Activated B cell treated with CpG ODN at 0.5 μM for 24 hours (primary cell): ENCODE measurements at regions of chr22 and their contacts with region 1.

Region 1: GRCh38 chr22:41800348-41801146 is at the start of gene CCDC134:
- DNase-seq: peak; percentile 88
- ATAC-seq: peak; percentile 98
- H3K4me3 Mint-ChIP-seq: peak within 1 kb of the TSS; percentile 98
- H3K27ac Mint-ChIP-seq: peak within 1 kb of the TSS; percentile 97
- H3K4me1 Mint-ChIP-seq: peaks cover 34% of the 10 kb centered on the region
- H3K27me3 Mint-ChIP-seq: no peaks in the 10 kb centered on the region
- CTCF ChIP-seq: no peak
- total RNA-seq, gene CCDC134: 9.2 and 13.2 TPM in 2 replicates

Region 2: GRCh38 chr22:41666661-41667258 is 133.8 kb before region 1 on chr22:
- CTCF ChIA-PET with region 1: interaction called, 3 read pairs
- POLR2A ChIA-PET with region 1: interaction called, 10 read pairs
- intact Hi-C with region 1: no loop called
- DNase-seq: peak; percentile 94
- ATAC-seq: peak; percentile 95
- H3K4me3 Mint-ChIP-seq: peak overlapping the region; percentile 84
- H3K27ac Mint-ChIP-seq: peak overlapping the region; percentile 92
- H3K4me1 Mint-ChIP-seq: peaks cover 5% of the 10 kb centered on the region
- H3K27me3 Mint-ChIP-seq: no peaks in the 10 kb centered on the region
- CTCF ChIP-seq: peak; percentile 74

Region 3: DNA sequence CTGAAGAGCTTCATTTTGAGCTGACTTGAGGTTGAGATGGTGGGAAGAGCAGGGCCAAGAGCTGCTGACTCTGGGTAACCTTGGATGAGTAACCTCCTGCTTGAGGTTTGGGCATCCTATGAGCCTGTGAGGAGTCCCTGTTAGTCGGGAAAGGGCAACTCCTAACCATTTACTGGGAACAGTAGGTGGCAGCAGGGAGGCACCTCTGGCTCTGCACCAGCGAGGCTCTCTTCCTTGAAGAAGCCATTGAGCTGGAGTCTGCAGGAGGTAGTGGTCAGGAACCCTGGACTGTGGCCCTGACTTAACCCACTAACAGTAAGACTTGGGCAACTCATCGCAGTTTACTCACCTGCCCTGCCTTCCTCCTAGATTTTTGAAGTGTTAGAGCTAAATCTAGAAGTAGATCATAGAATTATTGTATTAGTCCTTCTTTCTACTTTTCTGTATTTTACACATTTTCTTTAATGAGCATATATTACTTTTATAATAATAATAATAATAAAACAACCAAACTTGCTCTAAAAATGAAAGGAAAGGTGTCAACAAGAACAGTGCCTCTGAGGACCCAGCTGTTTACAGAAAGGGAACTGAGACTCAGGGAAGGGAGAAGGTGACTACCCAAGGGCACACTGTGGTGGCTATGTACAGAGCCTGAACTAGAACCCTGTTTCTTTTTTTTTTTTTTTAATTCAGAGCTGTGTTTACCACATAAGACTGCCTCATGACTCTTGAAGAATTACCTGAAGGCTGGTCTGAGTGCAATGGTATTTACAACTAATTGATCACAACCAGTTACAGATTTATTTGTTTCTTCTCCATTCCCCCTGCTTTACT is 53.8 kb before region 1 on chr22:
- CTCF ChIA-PET with region 1: interaction called, 4 read pairs
- POLR2A ChIA-PET with region 1: interaction called, 28 read pairs
- intact Hi-C with region 1: loop called (anchors 2 kb)
- DNase-seq: peak; percentile 18
- ATAC-seq: peak; percentile 96
- H3K4me3 Mint-ChIP-seq: peak overlapping the region; percentile 38
- H3K27ac Mint-ChIP-seq: peak overlapping the region; percentile 69
- H3K4me1 Mint-ChIP-seq: peaks cover 31% of the 10 kb centered on the region
- H3K27me3 Mint-ChIP-seq: no peaks in the 10 kb centered on the region
- CTCF ChIP-seq: no peak

Region 4: DNA sequence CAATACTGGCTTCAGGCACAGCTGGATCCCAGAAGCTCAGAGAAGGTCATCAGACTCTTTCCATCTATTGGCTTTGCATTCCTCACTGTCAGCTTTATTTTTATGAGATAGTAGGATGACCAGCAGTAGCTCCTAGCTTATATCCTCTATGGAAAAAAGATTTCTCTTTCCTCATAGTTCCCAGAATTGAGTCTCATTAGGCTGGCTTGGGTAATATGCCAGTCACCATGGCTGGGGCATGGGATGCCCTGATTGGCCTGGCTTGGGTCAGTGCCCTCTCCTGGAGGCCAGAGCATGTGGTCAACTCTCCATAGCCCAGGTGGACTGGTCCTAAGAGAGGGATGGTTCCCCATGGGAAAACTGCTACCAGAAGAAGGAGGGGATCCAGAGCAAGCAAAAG is 14.1 kb before region 1 on chr22:
- CTCF ChIA-PET with region 1: interaction called, 5 read pairs
- POLR2A ChIA-PET with region 1: interaction called, 175 read pairs
- intact Hi-C with region 1: loop called (anchors 1 kb)
- DNase-seq: no peak
- ATAC-seq: no peak
- H3K4me3 Mint-ChIP-seq: no peak overlapping the region
- H3K27ac Mint-ChIP-seq: no peak overlapping the region
- H3K4me1 Mint-ChIP-seq: peaks cover 24% of the 10 kb centered on the region
- H3K27me3 Mint-ChIP-seq: no peaks in the 10 kb centered on the region
- CTCF ChIP-seq: no peak

Region 5: DNA sequence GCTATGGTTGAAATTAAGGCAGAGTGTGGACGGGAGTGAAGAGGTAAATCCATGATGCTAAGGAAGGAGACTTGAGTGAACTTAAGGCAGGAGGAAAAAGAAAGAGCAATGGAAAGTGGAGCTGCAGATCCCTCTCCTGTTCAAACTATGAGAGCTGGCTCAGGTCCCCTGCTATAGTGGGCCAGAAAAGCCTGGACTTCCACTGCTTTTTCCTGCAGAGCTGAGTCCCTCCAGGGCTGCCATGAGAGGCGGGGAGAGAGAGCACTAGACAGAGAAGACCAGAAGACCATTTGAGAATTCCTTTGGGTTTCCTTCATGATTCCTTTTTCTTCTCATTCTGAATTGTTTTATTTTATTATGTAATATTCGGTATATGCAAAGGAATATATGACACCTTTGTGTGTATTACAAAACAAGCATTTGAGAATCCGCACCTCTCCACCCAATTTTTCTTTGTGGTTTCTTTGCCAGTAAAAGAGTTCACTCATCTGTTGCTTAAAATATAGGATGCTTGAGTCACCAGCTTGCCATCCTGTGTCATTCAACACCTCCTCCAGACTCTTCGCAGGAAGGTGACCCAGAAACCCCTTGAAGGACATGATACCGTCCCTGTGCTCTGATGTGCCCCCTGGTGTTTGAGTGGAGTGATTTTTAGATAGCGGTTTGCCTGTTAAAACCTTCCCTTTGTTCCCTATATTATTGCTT is 56.8 kb after region 1 on chr22:
- CTCF ChIA-PET with region 1: interaction called, 3 read pairs
- POLR2A ChIA-PET with region 1: interaction called, 19 read pairs
- intact Hi-C with region 1: loop called (anchors 10 kb)
- DNase-seq: no peak
- ATAC-seq: peak; percentile 18
- H3K4me3 Mint-ChIP-seq: peak overlapping the region; percentile 45
- H3K27ac Mint-ChIP-seq: peak overlapping the region; percentile 77
- H3K4me1 Mint-ChIP-seq: peaks cover 72% of the 10 kb centered on the region
- H3K27me3 Mint-ChIP-seq: no peaks in the 10 kb centered on the region
- CTCF ChIP-seq: no peak

Region 6: DNA sequence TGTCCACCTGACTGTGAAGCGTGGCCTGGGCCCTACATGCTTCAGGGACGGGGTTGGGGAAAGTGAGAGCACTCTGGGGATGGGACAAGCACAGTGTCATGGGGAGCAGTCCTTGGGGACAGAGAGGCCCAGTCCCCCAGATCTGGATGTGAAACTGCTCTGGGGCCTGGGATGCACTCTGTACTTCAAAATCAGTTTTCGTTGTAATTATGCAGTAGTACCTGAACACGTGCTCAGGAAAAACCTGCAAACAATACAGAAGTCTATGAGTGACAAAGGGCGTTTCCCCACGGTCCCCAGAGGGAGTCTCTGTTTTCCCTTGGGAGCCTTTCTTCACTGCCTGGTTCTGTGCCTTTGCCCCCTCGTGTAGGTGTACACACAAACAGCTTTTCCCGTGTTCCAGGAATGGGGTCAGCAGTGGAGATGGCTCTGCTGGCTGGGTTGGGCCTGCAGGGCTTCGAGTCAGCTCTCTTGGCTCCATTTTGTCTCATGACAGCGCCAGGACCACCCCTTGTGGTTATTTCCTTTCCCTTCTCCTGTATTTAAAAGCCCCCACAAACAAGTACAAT is 131.2 kb after region 1 on chr22:
- CTCF ChIA-PET with region 1: no interaction called
- POLR2A ChIA-PET with region 1: interaction called, 14 read pairs
- intact Hi-C with region 1: no loop called
- DNase-seq: peak; percentile 72
- ATAC-seq: peak; percentile 35
- H3K4me3 Mint-ChIP-seq: peak overlapping the region; percentile 52
- H3K27ac Mint-ChIP-seq: peak overlapping the region; percentile 100
- H3K4me1 Mint-ChIP-seq: peaks cover 97% of the 10 kb centered on the region
- H3K27me3 Mint-ChIP-seq: no peaks in the 10 kb centered on the region
- CTCF ChIP-seq: no peak

Region 7: DNA sequence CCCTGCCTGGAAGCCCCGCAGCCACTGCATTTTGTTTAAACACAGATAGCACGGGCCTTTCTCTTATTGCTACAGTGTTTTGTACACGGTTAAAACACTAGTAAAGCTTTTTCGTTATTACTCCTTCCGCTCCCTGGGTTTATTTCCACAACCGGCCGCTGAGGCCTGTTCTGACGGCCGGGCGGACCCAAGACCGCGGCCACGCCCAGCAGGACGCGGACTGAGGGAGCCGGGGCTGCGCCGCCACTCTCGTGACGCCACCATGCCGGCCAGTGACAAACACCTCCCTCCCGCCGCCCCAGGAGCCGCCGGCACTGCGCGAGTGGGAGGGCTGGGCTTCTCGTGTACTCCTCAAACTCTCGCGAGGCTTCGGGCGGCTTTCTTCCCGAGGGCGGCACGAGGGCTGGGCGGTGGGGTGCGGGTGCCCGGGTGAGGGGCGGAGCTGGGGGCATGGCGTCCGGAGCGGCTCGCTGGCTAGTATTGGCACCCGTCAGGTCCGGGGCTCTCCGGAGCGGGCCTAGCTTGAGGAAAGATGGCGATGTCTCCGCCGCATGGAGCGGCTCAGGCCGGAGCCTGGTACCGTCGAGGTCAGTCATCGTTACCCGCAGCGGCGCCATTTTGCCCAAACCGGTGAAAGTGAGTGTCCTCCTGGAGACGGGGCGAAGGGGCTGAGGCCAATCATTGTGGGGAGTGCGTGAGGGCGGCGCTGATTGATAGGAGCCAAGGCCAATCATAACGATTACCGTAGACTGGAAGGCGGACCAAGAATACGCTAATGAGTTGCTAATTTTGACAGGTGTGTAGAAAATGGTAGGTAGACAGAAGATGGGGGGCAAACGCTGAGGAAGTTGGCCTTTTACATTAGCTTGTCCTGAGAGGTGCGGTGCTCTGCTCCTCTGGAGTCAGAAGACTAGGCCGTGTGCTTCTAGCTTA is 279.0 kb after region 1 on chr22 and contains the start of gene SMDT1:
- CTCF ChIA-PET with region 1: no interaction called
- POLR2A ChIA-PET with region 1: interaction called, 4 read pairs
- intact Hi-C with region 1: loop called (anchors 10 kb)
- DNase-seq: peak; percentile 97
- ATAC-seq: peak; percentile 89
- H3K4me3 Mint-ChIP-seq: peak within 1 kb of the TSS; percentile 95
- H3K27ac Mint-ChIP-seq: peak within 1 kb of the TSS; percentile 97
- H3K4me1 Mint-ChIP-seq: peaks cover 38% of the 10 kb centered on the region
- H3K27me3 Mint-ChIP-seq: no peaks in the 10 kb centered on the region
- CTCF ChIP-seq: no peak
- total RNA-seq, gene SMDT1: 165 and 167 TPM in 2 replicates